HepG2 (cell line): ENCODE measurements at regions of chr3 and their contacts with region 1.

Region 1: GRCh38 chr3:52934630-52935530 is 37.5 kb upstream of the STIMATE start:
- DNase-seq: peak; percentile 46
- ATAC-seq: peak; percentile 92
- H3K4me3 ChIP-seq: no peak overlapping the region
- H3K27ac ChIP-seq: no peak overlapping the region
- H3K4me1 ChIP-seq: peaks cover 6% of the 10 kb centered on the region; the same call in 1 of the 2 replicates
- H3K27me3 ChIP-seq: no peaks in the 10 kb centered on the region
- CTCF ChIP-seq: peak; percentile 81
- EP300 ChIP-seq: no peak
- POLR2A ChIP-seq: no peak
- RAD21 ChIP-seq: peak; percentile 26; the same call in 1 of the 2 replicates

Region 2: GRCh38 chr3:53072653-53073552 is 138.0 kb after region 1 on chr3:
- CTCF ChIA-PET with region 1: interaction called, 10 read pairs
- POLR2A ChIA-PET with region 1: no interaction called
- in situ Hi-C with region 1: no loop called
- intact Hi-C with region 1: loop called (anchors 1 kb)
- DNase-seq: peak; percentile 81
- ATAC-seq: peak; percentile 93
- H3K4me3 ChIP-seq: peak overlapping the region; percentile 67 to 83 (median 70)
- H3K27ac ChIP-seq: peak overlapping the region; percentile 71
- H3K4me1 ChIP-seq: peaks cover 27% of the 10 kb centered on the region
- H3K27me3 ChIP-seq: peaks cover 0 to 1% of the 10 kb centered on the region in 2 experiments; a peak in 2 of 5 replicates
- CTCF ChIP-seq: peak; percentile 99
- EP300 ChIP-seq: no peak
- POLR2A ChIP-seq: peak; percentile 45 to 82; a peak in 3 of 4 replicates
- RAD21 ChIP-seq: peak; percentile 91